Caco-2 (cell line): ENCODE measurements at regions of chr2 and their contacts with region 1.

Region 1: DNA sequence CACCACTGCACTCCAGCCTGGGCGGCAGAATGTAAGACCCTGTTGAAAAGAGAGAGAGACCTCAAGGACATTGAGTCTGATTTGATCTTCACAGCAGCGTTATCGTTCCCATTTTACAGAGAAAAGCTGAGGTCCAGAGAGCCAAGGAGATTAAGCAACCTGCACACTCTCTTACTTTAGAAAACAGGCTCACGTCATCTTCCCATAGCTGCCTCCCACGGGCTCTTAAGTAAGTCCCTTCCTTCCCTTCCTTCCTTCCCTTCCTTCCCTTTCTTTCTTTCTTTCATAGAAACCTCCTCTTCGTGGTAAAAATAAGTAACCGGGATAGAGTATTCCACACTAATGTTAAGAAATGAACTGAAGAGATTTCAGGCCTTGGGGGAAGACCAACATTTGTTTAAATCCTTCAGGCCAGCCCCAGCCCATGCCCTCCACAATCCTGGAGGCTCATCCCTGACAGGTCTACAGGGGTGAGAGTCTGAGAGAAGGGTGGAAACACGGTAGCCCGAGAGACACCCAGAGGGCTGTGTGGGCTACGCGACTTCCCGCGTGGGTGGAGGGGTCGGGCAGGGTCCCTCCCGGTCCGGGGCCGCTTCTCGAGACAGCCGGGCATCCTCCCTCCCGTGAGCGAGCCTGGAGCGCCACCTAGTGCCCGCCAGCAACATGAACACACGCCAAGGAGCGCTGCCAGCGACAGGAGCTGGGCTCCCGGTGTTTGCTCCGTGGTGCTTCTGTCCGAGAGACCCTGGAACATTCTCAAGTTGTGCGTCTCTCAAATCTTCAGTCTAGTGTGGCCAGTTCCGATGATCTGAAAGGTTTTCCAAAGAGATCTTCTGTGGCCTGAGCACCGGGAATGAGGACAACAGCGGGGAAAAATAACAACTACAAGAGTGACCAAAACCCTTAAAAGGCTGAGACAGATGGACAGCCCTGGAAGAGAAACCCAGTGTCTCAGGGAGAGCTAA is 160.3 kb downstream of the INO80D start:
- DNase-seq: peak; percentile 77 to 88
- H3K4me3 ChIP-seq: peak overlapping the region; percentile 22
- H3K4me3 Mint-ChIP-seq: peak overlapping the region; percentile 17
- H3K27ac Mint-ChIP-seq: no peak overlapping the region
- H3K4me1 ChIP-seq: peaks cover 21% of the 10 kb centered on the region
- H3K4me1 Mint-ChIP-seq: peaks cover 21% of the 10 kb centered on the region
- H3K27me3 ChIP-seq: no peaks in the 10 kb centered on the region
- H3K27me3 Mint-ChIP-seq: no peaks in the 10 kb centered on the region
- CTCF ChIP-seq: peak; percentile 95

Region 2: GRCh38 chr2:205235434-205235833 is 690.2 kb before region 1 on chr2:
- CTCF ChIA-PET with region 1: no interaction called
- POLR2A ChIA-PET with region 1: no interaction called
- intact Hi-C with region 1: no loop called
- DNase-seq: no peak
- H3K4me3 ChIP-seq: no peak overlapping the region
- H3K4me3 Mint-ChIP-seq: no peak overlapping the region
- H3K27ac Mint-ChIP-seq: peak overlapping the region; percentile 63
- H3K4me1 ChIP-seq: no peaks in the 10 kb centered on the region; the same call in 1 of the 2 replicates
- H3K4me1 Mint-ChIP-seq: peaks cover 12% of the 10 kb centered on the region
- H3K27me3 ChIP-seq: no peaks in the 10 kb centered on the region
- H3K27me3 Mint-ChIP-seq: no peaks in the 10 kb centered on the region
- CTCF ChIP-seq: no peak

Region 3: GRCh38 chr2:205696331-205696923 is 229.2 kb before region 1 on chr2:
- CTCF ChIA-PET with region 1: no interaction called
- POLR2A ChIA-PET with region 1: no interaction called
- intact Hi-C with region 1: loop called (anchors 5 kb)
- DNase-seq: peak; percentile 81 to 85
- H3K4me3 ChIP-seq: no peak overlapping the region
- H3K4me3 Mint-ChIP-seq: no peak overlapping the region
- H3K27ac Mint-ChIP-seq: peak overlapping the region; percentile 43
- H3K4me1 ChIP-seq: peaks cover 57% of the 10 kb centered on the region
- H3K4me1 Mint-ChIP-seq: peaks cover 50% of the 10 kb centered on the region
- H3K27me3 ChIP-seq: no peaks in the 10 kb centered on the region
- H3K27me3 Mint-ChIP-seq: no peaks in the 10 kb centered on the region
- CTCF ChIP-seq: peak; percentile 60 to 85

Region 4: GRCh38 chr2:205776139-205776538 is 149.5 kb before region 1 on chr2:
- CTCF ChIA-PET with region 1: interaction called, 12 read pairs
- POLR2A ChIA-PET with region 1: no interaction called
- intact Hi-C with region 1: loop called (anchors 1 kb)
- DNase-seq: peak; percentile 71 to 74
- H3K4me3 ChIP-seq: no peak overlapping the region
- H3K4me3 Mint-ChIP-seq: no peak overlapping the region
- H3K27ac Mint-ChIP-seq: no peak overlapping the region
- H3K4me1 ChIP-seq: peaks cover 12% of the 10 kb centered on the region
- H3K4me1 Mint-ChIP-seq: peaks cover 4% of the 10 kb centered on the region
- H3K27me3 ChIP-seq: no peaks in the 10 kb centered on the region
- H3K27me3 Mint-ChIP-seq: no peaks in the 10 kb centered on the region
- CTCF ChIP-seq: peak; percentile 68 to 80

Region 5: DNA sequence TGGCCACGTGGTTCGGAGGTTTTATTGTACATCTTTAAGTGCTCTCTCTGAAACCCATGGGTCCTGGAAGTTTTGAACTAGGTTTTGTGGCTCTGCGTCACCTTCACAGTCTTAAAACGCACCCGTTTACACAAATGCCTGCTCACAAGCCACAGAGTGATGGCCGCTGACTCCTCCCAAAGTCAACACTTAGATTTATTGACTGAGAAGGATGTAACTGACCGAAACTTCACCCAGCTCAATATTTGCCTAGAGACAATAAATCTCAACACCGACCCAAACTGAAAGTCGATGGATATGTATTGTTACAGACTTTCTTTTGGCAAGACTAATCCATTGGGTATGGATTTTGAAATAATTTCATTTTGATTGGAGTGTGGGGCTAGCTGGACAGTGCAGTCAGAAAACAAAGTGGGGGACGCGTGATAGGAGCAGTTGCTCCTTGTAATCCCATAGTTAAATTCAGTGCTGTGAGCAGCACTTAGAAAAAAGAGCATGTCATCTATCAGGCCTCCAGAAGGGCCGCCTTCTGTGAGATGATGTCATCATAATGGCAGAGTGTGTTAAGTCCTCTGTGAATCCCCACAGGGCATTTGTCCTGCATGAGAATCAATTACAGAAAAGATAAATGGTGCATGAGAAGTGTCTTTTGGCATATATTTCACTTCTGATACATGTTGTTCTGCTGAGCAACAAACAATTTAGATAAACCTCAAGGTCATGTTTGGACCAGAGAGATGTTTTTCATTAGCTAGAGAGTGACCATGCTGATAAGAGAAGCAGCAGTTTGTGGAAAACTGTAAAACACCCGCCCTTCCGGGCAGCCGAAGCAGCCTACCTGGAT is 23.4 kb before region 1 on chr2:
- CTCF ChIA-PET with region 1: interaction called, 16 read pairs
- POLR2A ChIA-PET with region 1: no interaction called
- intact Hi-C with region 1: loop called (anchors 1 kb)
- DNase-seq: peak; percentile 65 to 74
- H3K4me3 ChIP-seq: 0 out of 2 replicates have a peak overlapping the region, but pooled peaks have one; percentile 0
- H3K4me3 Mint-ChIP-seq: peak overlapping the region; percentile 64
- H3K27ac Mint-ChIP-seq: peak overlapping the region; percentile 84
- H3K4me1 ChIP-seq: peaks cover 22% of the 10 kb centered on the region
- H3K4me1 Mint-ChIP-seq: peaks cover 17% of the 10 kb centered on the region
- H3K27me3 ChIP-seq: no peaks in the 10 kb centered on the region
- H3K27me3 Mint-ChIP-seq: no peaks in the 10 kb centered on the region
- CTCF ChIP-seq: no peak